ENCODE measurements at regions of chr5 and their contacts with region 1.

Region 1: DNA sequence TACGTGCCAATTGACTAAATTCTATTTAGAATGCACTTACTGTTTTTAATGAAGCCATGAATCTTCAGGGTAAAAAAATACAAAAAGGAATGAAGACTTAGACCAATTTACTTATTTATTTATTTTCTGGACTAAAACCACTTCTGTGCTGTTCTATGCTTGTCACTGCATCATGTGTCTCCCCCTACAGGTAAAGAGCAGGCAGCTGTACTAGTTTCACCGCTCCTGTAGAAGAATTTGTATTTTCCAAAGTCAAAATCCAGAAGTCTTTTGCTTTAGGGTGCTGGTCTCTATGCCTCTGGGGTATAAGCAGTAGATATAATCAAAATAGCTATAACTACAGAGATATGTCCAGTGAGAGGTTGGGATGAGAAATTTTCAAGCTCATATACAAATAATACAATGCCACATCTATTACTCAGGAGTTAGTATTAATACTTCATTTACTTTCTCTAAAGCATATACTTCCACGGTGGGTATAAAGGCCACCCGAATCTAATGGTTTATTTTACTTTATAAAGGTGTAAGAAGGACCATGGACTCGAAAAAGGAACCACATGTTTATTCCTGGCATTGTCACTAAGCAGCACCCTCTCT is 591.5 kb downstream of the RAB3C start:
- DNase-seq: peak; percentile 50
- H3K4me3 Mint-ChIP-seq: no peak overlapping the region
- H3K27ac Mint-ChIP-seq: no peak overlapping the region
- H3K4me1 Mint-ChIP-seq: peaks cover 49% of the 10 kb centered on the region
- H3K27me3 Mint-ChIP-seq: peaks cover 5% of the 10 kb centered on the region

Region 2: DNA sequence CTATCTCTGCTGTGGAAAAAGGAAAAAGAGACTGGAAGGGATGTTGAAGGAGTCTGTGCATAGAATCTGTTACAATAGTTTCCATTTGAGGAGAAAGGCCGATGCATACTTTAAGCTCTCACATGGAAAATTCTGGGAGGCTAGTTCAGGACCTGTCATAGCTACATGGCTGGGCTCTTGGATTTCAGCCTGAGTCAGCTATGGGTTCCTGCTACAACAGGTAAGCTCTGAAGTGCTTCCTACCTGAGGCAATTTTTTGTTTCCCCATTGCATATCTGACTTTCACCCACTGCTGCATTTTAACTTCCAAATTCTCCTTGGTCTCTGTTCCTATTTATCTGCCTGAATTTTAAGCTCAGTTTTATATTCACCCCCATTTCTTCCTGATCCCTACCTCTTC is 280.8 kb before region 1 on chr5:
- CTCF ChIA-PET with region 1: interaction called, 40 read pairs
- DNase-seq: no peak
- H3K4me3 Mint-ChIP-seq: no peak overlapping the region
- H3K27ac Mint-ChIP-seq: no peak overlapping the region
- H3K4me1 Mint-ChIP-seq: peaks cover 6% of the 10 kb centered on the region
- H3K27me3 Mint-ChIP-seq: peaks cover 18% of the 10 kb centered on the region

Region 3: DNA sequence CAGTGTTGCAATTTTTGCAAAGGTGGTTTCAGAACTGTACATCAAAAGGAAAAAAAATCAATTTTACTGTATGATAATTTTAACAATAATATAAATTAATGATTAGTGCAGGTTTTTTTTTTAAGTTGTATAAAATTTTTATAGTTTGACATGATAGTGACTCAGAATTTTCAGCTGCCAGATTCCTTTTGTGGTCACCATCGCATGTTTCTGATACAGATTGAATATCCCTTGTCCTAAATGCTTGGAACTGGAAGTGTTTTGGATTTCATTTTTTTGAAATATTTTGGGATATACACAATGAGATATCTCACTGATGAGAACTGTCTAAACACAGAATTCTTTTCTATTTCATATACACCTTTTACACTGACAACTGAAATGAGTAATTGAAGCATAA is 230.1 kb before region 1 on chr5:
- CTCF ChIA-PET with region 1: no interaction called
- DNase-seq: no peak
- H3K4me3 Mint-ChIP-seq: no peak overlapping the region
- H3K27ac Mint-ChIP-seq: no peak overlapping the region
- H3K4me1 Mint-ChIP-seq: no peaks in the 10 kb centered on the region
- H3K27me3 Mint-ChIP-seq: no peaks in the 10 kb centered on the region

Region 4: DNA sequence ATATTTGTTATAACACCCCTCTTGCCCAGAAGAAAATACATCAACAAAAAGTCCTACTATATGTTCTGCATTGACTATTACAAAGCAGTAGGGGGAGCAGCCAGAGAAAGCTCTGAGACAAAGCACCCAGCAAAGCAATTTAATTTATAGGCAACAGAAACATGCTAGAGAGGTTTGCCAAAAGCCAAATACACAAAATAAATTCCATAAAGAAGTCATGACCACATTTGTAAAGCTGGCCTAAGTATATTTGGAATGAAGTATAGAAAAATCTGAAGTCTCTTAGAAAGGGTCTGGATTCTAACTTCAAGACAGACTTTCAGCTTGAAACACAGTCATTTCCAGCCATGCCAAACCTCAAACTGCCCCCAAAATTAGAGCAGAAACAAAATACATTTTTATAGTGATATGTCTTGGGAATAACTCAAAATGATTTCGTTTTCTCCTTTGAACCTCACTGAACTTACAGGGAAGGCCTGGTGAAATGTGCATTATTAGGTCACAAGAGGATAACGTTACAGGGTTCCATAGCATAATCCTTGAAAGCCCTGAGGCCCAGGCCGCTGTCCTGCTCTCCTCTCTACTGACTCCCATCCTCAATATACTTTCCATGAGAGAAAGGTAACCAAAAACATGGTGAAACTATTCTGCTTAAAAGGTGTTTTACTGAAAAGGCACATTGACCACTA is 139.7 kb before region 1 on chr5:
- CTCF ChIA-PET with region 1: interaction called, 136 read pairs
- DNase-seq: peak; percentile 34
- H3K4me3 Mint-ChIP-seq: peak overlapping the region; percentile 89
- H3K27ac Mint-ChIP-seq: peak overlapping the region; percentile 99
- H3K4me1 Mint-ChIP-seq: peaks cover 53% of the 10 kb centered on the region
- H3K27me3 Mint-ChIP-seq: no peaks in the 10 kb centered on the region

Region 5: GRCh38 chr5:59126708-59127573 is 47.4 kb before region 1 on chr5:
- CTCF ChIA-PET with region 1: interaction called, 36 read pairs
- DNase-seq: no peak
- H3K4me3 Mint-ChIP-seq: no peak overlapping the region
- H3K27ac Mint-ChIP-seq: no peak overlapping the region
- H3K4me1 Mint-ChIP-seq: peaks cover 17% of the 10 kb centered on the region
- H3K27me3 Mint-ChIP-seq: no peaks in the 10 kb centered on the region

Region 6: GRCh38 chr5:59158165-59158564 is 16.2 kb before region 1 on chr5:
- CTCF ChIA-PET with region 1: interaction called, 17 read pairs
- DNase-seq: no peak
- H3K4me3 Mint-ChIP-seq: no peak overlapping the region
- H3K27ac Mint-ChIP-seq: no peak overlapping the region
- H3K4me1 Mint-ChIP-seq: peaks cover 21% of the 10 kb centered on the region
- H3K27me3 Mint-ChIP-seq: no peaks in the 10 kb centered on the region

Region 7: GRCh38 chr5:59264639-59265240 is 90.4 kb after region 1 on chr5:
- CTCF ChIA-PET with region 1: no interaction called
- DNase-seq: no peak
- H3K4me3 Mint-ChIP-seq: no peak overlapping the region
- H3K27ac Mint-ChIP-seq: no peak overlapping the region
- H3K4me1 Mint-ChIP-seq: no peaks in the 10 kb centered on the region
- H3K27me3 Mint-ChIP-seq: no peaks in the 10 kb centered on the region

Region 8: DNA sequence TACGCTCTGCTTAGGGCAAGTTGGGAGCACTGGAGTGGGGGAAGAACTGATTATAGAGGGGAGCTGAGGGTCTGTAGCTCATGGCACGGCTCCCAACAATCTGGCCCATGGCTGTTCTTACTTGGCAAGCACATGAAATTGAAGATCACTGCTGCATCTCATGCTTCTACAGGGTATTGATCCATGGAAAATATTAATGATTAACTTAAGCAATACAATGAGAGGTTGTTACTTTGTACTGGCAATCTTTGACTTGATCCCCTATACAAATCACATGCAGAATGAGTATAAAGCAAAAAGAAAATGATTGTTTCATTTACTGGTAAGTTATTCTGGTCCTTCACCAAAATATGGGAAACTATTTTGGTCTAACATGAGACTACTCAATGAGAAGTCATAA is 238.1 kb after region 1 on chr5:
- CTCF ChIA-PET with region 1: no interaction called
- DNase-seq: no peak
- H3K4me3 Mint-ChIP-seq: no peak overlapping the region
- H3K27ac Mint-ChIP-seq: no peak overlapping the region
- H3K4me1 Mint-ChIP-seq: no peaks in the 10 kb centered on the region
- H3K27me3 Mint-ChIP-seq: no peaks in the 10 kb centered on the region